Activated CD4-positive, alpha-beta T cell treated with anti-CD3 and anti-CD28 coated beads, Interleukin-2, amount 10 ng/mL, durations not matched to agents 24 days and 14 days (primary cell): ENCODE measurements at regions of chr15 and their contacts with region 1.

Region 1: DNA sequence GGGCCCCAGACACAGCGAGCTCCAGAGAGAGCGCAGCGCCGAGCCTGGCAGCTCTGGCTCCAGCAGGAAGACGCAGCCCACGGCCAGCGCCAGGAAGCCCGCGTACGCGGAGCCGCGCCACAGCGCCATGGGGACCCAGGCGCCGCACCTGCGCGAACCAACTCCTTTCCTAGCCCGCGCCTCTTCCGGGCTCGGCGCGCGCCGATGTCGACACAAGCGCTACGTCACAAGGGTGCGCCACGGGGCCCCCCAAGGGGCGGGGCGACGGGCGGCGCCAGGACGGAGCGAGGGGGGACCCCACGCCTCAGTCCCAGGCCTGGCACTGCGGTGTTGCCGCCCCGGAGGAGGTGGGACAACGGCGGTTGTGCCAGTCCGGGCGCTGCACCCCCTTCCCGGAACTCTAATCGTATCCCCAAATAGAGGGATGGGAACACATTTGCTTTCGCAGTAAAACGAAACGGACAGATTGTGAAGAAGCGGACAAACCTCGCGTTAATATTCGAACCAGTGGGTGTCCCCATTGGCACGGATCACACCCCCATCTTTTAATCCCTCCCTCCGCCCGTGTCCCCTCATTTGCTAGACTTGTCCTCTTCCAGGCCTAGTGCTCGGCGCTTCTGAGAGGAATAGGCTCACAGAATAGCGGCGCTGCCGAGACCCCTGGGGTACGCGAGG is at the start of gene ADPGK:
- DNase-seq: peak; percentile 99
- H3K4me3 Mint-ChIP-seq: peak within 1 kb of the TSS; percentile 91
- H3K27ac Mint-ChIP-seq: peak within 1 kb of the TSS; percentile 98
- H3K4me1 Mint-ChIP-seq: peaks cover 67% of the 10 kb centered on the region
- H3K27me3 Mint-ChIP-seq: no peaks in the 10 kb centered on the region
- total RNA-seq, gene ADPGK: 107 and 112 TPM in 2 replicates

Region 2: GRCh38 chr15:72117486-72118399 is 666.0 kb before region 1 on chr15 and contains the start of gene MYO9A:
- intact Hi-C with region 1: loop called (anchors 5 kb)
- DNase-seq: peak; percentile 98
- H3K4me3 Mint-ChIP-seq: peak within 1 kb of the TSS; percentile 95
- H3K27ac Mint-ChIP-seq: peak within 1 kb of the TSS; percentile 99
- H3K4me1 Mint-ChIP-seq: peaks cover 26% of the 10 kb centered on the region
- H3K27me3 Mint-ChIP-seq: peaks cover 17% of the 10 kb centered on the region
- total RNA-seq, gene MYO9A: 19.4 and 21.3 TPM in 2 replicates

Region 3: DNA sequence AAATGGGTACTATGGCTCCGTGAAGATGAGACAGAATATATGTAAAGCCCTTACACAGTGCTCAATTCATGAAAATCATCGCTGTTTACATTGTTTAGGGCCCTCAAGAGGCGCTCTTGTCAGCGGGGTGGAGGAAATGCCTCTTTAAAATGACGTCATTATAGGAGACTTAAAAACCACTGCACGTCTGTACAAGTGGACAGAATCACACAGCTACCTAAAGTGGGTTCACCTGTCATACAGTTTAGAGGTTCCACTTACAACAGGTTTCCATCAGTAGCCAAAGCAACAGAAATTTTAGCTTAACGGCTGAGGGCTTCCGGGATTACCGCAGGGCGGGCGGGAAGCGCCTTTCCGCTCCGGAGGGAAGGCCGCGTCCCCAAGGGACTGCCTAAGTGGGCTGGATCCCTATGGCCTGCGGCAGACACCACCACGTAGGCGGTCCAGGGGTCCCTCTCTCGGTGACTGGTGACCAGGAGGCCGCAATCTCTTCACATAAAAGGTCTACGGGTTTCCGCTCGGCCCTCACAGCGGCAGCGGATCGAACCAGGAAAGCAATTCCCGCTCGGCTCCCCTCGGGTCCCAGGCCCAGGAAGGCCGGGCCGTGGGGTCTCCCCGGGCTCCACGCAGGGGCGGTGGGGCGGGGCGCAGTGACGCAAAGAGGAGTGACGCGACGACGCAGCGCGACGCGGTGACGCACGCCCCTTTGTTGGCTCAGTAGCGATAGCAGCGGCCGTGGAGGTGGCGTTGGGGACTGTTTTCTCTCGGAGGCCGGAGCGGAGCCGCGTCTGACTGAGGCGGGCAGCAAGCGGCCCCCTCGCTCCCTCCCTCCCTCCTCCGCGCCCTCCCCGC is 309.9 kb before region 1 on chr15 and contains the start of gene ARIH1:
- intact Hi-C with region 1: loop called (anchors 2 kb)
- DNase-seq: peak; percentile 99
- H3K4me3 Mint-ChIP-seq: peak within 1 kb of the TSS; percentile 91
- H3K27ac Mint-ChIP-seq: peak within 1 kb of the TSS; percentile 99
- H3K4me1 Mint-ChIP-seq: peaks cover 31% of the 10 kb centered on the region
- H3K27me3 Mint-ChIP-seq: no peaks in the 10 kb centered on the region
- total RNA-seq, gene ARIH1: 140 and 141 TPM in 2 replicates

Region 4: DNA sequence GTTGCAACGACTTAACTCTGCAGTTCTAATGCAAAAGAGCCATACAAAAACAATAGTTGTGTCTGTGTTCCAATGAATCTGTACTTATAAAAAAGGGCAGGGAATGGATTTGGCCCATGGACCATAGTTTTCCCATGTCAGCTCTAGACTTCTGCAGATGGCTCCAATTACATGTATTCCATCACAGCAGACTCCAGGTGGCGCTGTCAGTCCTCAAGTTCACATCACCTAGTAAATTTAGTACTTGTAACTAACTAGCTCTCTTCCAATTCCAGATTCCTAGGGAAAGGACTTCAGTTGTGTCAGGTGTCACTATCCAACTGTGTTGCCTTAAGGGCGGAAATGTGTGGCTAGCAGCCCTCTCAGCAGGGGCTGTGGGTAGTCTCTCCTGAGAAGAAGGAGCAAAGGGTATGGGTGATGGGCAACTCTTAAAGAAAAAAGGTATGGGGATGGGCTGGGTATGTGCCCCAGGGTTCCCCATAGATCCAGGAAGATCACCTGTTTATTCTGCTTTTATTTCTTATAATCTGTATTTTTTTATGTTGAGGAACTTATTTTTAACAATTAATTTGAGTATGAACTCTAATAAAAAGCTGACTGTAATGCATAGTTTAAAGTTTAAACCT is 61.5 kb before region 1 on chr15:
- intact Hi-C with region 1: loop called (anchors 5 kb)
- DNase-seq: peak; percentile 90
- H3K4me3 Mint-ChIP-seq: no peak overlapping the region
- H3K27ac Mint-ChIP-seq: no peak overlapping the region
- H3K4me1 Mint-ChIP-seq: no peaks in the 10 kb centered on the region
- H3K27me3 Mint-ChIP-seq: no peaks in the 10 kb centered on the region

Region 5: DNA sequence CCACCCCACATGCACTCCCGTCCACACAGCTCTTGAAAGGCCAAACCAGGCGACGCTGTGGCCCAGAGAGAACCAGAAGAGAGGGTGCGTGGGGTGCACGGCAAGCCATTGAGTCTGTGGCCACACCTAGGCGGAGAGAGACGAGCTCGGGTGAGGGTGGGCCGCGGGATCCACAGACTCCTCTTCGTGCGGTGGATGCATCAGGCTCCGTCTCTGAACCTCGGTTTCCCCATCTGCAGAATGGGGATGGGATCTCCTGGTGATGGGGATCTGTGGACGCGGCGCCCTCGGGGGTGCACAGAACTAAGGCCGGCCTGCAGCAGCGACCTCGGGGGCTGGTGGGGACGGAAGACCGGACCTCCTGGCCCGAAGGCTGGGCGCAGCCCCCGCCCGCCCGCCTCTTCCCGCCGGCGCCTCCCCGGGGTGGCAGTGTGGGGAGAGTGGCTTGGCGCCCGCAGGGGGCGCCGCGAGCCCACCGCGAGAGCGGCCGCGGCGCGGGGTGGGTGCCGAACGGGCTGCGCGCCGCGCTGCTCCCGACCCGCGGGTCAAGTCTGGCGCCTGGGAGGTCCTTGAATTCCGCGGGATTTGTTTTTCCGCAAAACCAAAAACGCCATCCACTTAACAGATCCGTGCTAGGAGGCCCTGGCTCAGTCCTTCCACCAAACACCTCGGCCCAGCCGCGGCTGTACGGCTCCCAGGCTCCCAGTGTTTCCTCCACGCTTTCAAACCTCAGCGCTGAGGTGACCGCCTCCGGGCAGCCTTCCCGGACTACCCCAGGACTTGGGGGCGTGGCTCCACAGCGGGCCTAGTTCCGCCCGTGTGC is 13.0 kb after region 1 on chr15:
- intact Hi-C with region 1: loop called (anchors 1 kb)
- DNase-seq: peak; percentile 79
- H3K4me3 Mint-ChIP-seq: peak overlapping the region; percentile 81
- H3K27ac Mint-ChIP-seq: peak overlapping the region; percentile 72
- H3K4me1 Mint-ChIP-seq: peaks cover 10% of the 10 kb centered on the region
- H3K27me3 Mint-ChIP-seq: peaks cover 30% of the 10 kb centered on the region

Region 6: GRCh38 chr15:73240866-73241499 is 457.3 kb after region 1 on chr15:
- intact Hi-C with region 1: loop called (anchors 10 kb)
- DNase-seq: peak; percentile 92
- H3K4me3 Mint-ChIP-seq: no peak overlapping the region
- H3K27ac Mint-ChIP-seq: no peak overlapping the region
- H3K4me1 Mint-ChIP-seq: peaks cover 3% of the 10 kb centered on the region
- H3K27me3 Mint-ChIP-seq: peaks cover 1% of the 10 kb centered on the region